ENCODE measurements at regions of chr1 and their contacts with region 1.

Region 1: DNA sequence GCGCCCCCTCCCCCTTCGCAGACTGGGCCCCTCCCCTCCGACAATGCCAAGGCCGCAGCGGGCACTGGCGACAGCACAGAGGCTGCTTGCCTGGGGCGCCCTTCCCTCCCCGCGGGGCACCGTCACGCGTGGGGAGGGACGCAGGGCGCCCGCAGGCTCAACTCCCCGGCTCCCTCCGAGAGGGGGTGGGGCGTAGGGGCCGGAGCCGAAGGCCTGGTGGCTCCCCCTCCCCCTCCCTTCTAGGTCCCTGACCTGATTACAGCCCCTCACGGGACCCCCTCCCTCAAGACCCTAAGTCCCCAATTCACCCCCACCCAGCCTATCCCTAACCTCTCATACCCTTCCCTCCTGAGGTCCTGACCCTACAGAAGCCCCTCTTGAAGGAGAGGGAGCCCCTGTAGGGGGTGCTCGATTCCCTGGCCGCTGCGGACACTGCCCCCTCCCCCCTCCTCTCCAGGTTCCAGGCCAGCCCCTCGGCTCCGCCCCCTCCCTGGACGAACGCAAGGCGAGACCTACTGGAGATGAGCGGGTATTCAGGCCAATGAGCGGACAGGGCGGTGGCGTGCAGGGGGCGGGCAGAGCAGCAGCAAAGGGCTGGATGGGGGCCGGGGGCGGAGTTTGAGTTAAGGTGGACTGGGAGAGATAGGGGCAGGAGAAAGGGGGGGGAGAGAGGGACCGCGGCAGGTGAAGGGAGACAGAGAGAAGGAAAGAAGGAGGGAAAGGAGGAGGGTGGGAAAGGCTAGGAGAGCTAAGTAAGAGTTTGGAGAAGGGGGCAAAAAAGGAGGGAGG is 733 bp upstream of the ZBTB7B start:
- DNase-seq: peak; percentile 91
- H3K4me3 ChIP-seq: peak overlapping the region; percentile 64
- H3K27me3 ChIP-seq: no peaks in the 10 kb centered on the region
- CTCF ChIP-seq: peak; percentile 80

Region 2: GRCh38 chr1:154847891-154848290 is 154.0 kb before region 1 on chr1:
- CTCF ChIA-PET with region 1: no interaction called
- POLR2A ChIA-PET with region 1: no interaction called
- DNase-seq: no peak
- H3K4me3 ChIP-seq: no peak overlapping the region
- H3K27me3 ChIP-seq: peaks cover 8% of the 10 kb centered on the region
- CTCF ChIP-seq: no peak

Region 3: GRCh38 chr1:154943649-154944400 is 58.0 kb before region 1 on chr1:
- CTCF ChIA-PET with region 1: interaction called, 10 read pairs
- POLR2A ChIA-PET with region 1: no interaction called
- DNase-seq: no peak
- H3K4me3 ChIP-seq: no peak overlapping the region
- H3K27me3 ChIP-seq: no peaks in the 10 kb centered on the region
- CTCF ChIP-seq: peak; percentile 78

Region 4: DNA sequence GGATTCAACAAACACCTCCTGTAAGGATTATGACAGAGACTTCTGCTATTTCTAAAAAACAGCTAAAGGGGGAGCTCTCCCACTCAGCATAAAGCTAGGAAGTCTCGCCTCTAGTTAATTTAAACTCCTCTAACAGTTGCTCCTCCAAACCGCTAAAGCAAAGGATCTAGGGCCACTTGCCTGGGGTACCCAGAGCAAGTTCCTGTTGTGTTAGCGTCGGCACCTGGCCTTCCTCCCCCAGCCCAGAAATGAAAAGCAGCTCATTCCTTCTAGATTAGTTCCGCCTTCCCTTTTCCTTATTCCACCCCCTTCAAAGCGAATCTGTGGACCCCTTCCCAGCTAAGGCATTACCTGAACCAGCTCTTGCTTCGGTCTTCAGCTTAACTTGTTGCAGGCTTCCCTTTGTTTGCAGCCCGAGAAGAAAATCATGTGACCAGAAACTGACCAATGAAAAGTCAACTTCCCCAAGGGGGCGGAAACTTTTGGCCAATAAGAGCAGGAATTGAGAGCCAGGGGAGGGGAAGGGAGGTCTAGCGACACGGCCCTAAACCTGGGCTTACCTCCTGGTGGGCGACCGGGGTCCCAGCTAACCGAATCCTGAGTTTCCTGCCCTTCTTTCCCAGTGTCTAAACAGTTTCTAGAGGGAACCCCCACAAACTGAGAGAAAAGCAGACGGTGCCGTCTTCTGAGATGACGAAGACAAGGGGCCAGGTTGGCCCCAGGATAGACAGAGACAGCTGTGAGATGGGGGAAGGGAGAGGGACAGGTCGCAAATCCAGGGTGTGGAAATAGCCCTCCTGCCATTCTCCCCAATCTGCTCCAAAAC is 45.9 kb before region 1 on chr1 and contains the start of gene PBXIP1:
- CTCF ChIA-PET with region 1: interaction called, 54 read pairs
- POLR2A ChIA-PET with region 1: no interaction called
- DNase-seq: peak; percentile 80
- H3K4me3 ChIP-seq: peak within 1 kb of the TSS; percentile 52
- H3K27me3 ChIP-seq: no peaks in the 10 kb centered on the region
- CTCF ChIP-seq: peak; percentile 47
- polyA plus RNA-seq, gene PBXIP1: 65.6 and 83.1 TPM in 2 replicates

Region 5: GRCh38 chr1:154961497-154962262 is 40.2 kb before region 1 on chr1 and contains the start of gene PYGO2:
- CTCF ChIA-PET with region 1: interaction called, 54 read pairs
- POLR2A ChIA-PET with region 1: no interaction called
- DNase-seq: no peak
- H3K4me3 ChIP-seq: peak within 1 kb of the TSS; percentile 63
- H3K27me3 ChIP-seq: no peaks in the 10 kb centered on the region
- CTCF ChIP-seq: peak; percentile 37
- polyA plus RNA-seq, gene PYGO2: 18.0 and 21.0 TPM in 2 replicates

Region 6: DNA sequence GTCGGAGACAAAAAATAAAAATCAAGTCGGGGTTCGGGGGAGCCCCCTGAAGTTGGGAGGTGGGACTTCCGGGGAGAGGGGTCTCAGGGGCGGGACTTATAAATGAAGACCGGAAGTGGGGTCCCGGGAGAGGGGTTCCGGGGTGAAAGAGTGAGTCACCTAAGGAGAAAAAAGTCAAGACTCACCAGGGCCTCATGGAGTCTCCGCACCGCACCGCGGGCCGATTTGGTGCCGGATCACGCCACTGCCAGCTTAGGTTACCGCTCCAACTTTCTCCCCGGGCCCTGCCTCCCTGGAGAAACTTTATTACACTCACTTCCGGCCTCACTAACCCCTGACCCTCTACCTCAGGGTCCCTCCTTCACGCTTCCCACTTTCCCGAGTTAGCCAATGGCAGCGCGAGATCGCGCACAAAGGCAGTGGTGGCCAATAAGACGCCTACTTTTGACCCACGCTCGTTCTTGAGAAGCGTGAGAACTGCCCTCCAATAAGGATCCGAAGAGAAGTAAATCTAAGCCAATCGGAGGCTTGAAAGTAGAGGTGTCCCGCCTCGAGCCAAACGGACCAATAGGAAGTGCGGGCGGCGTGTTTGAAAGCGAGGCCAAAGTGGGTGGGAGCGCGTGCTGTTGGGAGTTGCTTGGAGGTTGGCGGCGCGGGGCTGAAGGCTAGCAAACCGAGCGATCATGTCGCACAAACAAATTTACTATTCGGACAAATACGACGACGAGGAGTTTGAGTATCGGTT is 27.6 kb before region 1 on chr1 and contains the start of gene CKS1B:
- CTCF ChIA-PET with region 1: interaction called, 40 read pairs
- POLR2A ChIA-PET with region 1: interaction called, 3 read pairs
- DNase-seq: peak; percentile 99
- H3K4me3 ChIP-seq: peak within 1 kb of the TSS; percentile 70
- H3K27me3 ChIP-seq: no peaks in the 10 kb centered on the region
- CTCF ChIP-seq: no peak
- polyA plus RNA-seq, gene CKS1B: 111 and 160 TPM in 2 replicates

Region 7: DNA sequence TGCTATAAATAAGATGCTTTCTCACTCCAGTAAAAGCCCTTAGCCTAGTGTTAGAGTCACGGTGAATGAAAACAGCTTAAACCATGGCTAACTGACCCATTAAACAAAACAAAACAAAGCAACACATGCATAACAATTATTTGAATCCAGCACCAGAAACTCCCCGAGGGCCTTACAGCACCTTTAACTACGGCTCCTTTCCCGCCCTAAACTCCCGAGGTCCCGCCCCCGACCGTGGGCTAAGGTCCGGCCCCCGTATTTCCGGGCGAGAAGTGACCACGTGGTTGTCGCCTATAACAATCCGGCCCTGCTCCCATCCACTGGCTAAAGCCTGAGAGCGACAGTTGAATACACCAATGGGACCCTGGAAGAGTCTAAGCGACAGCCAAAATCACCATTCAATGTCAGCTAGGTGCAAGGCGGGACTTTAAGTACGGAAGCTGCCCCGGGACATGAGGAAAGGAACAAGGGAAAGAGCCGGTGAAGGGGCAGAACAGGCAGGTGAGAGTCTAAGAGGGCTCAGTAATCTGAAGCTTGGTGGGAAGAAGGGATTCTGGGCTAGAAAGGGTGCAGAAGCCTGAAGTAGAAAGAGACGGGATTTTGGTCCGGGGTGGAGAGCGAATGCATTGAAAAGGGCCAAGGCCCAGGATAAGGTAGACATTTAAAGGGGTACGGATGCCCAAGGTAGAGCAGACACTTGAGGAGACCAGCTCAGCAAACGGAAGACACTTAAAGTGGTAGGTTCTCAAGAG is 18.8 kb before region 1 on chr1 and contains the start of gene FLAD1:
- CTCF ChIA-PET with region 1: interaction called, 23 read pairs
- POLR2A ChIA-PET with region 1: no interaction called
- DNase-seq: peak; percentile 98
- H3K4me3 ChIP-seq: peak within 1 kb of the TSS; percentile 62
- H3K27me3 ChIP-seq: no peaks in the 10 kb centered on the region
- CTCF ChIP-seq: no peak
- polyA plus RNA-seq, gene FLAD1: 26.5 and 40.5 TPM in 2 replicates

Region 8: GRCh38 chr1:156119503-156120209 is 1117.8 kb after region 1 on chr1:
- CTCF ChIA-PET with region 1: no interaction called
- POLR2A ChIA-PET with region 1: interaction called, 11 read pairs
- DNase-seq: no peak
- H3K4me3 ChIP-seq: peak overlapping the region; percentile 16
- H3K27me3 ChIP-seq: no peaks in the 10 kb centered on the region
- CTCF ChIP-seq: 0 out of 2 replicates have a peak, but pooled peaks have one; percentile 12